ENCODE measurements at regions of chr5 and their contacts with region 1.

Region 1: DNA sequence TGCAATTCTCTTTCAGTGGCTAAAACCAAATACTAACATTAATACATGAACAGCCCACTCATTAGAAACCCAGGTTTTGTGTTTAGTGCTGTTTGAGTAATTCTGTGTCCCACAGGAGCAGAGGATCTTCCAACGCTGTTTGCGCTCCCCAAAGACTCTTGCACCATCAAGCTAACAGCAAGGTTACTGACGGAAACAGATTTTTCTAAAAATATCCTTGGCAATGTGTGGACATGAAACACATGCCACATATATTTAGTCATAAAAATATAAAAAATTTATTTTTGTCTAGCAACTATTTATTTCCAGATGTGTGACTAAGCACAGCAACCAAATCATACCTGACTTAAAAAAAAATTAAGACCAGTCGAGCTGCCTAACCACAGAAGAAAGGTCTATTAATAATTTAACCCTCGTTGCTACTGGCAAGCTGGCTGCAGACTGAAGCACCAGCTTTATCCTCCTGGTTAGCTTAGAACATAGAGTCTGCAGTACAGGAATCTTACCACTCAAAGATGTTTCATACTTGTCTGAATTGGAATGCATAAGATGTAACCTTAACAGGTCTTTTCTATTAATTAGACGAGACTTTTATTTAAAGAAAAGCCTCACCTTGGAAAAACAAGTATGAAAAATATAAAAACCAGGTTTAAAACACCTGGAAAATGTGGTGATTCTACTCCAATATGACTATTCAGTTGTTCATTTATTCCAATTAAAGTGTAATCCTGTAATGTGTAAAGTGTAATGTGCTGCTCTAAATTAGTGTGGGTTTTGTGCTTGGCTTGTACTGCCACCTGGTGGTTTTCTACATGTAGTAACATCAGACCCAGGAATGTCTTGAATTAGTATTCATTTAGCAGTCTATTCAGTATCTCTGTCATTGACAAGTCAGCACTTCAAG is 272.5 kb downstream of the EPB41L4A start:
- DNase-seq: peak; percentile 39 to 69
- ATAC-seq: peak; percentile 90 to 95 (median 91)
- H3K4me3 ChIP-seq: no peak overlapping the region
- H3K27ac ChIP-seq: peak overlapping the region; percentile 74
- H3K4me1 ChIP-seq: peaks cover 17% of the 10 kb centered on the region
- H3K27me3 ChIP-seq: no peaks in the 10 kb centered on the region
- CTCF ChIP-seq: peak; percentile 94

Region 2: GRCh38 chr5:111158105-111158744 is 988.4 kb before region 1 on chr5:
- intact Hi-C with region 1: loop called in 1 of 2 experiments (anchors 5 kb)
- DNase-seq: peak in 1 of 2 donors; percentile 16
- ATAC-seq: peak in 2 of 4 donors; percentile 52 to 61
- H3K4me3 ChIP-seq: no peak overlapping the region
- H3K27ac ChIP-seq: no peak overlapping the region
- H3K4me1 ChIP-seq: no peaks in the 10 kb centered on the region
- H3K27me3 ChIP-seq: peaks cover 0 to 2% (median 0%) of the 10 kb centered on the region in 3 donors
- CTCF ChIP-seq: peak; percentile 98

Region 3: DNA sequence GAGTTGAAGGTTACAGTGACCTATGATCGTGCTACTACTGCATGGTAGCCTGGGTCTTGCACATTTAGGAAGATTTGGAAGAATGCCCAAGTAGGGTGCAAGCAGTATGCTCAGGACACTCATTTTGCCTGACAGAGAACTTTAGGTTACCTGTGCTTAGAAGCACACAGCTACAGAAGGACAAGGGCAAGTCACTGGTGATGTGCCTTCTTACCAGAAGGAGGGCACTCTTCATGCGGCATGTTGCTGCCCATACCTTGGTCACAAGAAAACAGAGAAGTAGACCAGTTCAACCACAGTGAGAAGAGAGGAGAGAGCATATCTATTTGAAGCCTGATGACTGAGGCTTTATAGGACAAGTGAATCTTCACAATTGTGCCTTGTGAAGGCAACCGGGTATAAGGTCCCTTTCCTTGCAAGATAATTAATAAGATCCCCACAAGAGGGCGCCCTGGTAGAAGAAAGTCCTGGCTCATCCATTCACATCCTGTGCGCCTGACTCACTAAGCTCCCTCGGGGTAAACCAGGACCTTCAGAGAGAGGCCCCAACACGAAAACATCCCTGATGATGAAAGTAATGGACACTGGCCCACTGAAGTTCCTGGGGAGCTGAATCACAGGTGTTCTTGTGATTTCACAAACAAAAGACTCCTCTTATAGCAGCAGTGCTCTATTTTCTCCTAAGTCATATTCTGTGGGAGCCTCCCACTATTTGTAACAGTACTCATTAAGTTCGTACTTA is 596.1 kb before region 1 on chr5:
- intact Hi-C with region 1: loop called (anchors 1 to 2 kb)
- DNase-seq: peak; percentile 76 to 83
- ATAC-seq: peak; percentile 93 to 99 (median 99)
- H3K4me3 ChIP-seq: no peak overlapping the region
- H3K27ac ChIP-seq: peak overlapping the region; percentile 75
- H3K4me1 ChIP-seq: peaks cover 8% of the 10 kb centered on the region
- H3K27me3 ChIP-seq: no peaks in the 10 kb centered on the region
- CTCF ChIP-seq: peak; percentile 76

Region 4: DNA sequence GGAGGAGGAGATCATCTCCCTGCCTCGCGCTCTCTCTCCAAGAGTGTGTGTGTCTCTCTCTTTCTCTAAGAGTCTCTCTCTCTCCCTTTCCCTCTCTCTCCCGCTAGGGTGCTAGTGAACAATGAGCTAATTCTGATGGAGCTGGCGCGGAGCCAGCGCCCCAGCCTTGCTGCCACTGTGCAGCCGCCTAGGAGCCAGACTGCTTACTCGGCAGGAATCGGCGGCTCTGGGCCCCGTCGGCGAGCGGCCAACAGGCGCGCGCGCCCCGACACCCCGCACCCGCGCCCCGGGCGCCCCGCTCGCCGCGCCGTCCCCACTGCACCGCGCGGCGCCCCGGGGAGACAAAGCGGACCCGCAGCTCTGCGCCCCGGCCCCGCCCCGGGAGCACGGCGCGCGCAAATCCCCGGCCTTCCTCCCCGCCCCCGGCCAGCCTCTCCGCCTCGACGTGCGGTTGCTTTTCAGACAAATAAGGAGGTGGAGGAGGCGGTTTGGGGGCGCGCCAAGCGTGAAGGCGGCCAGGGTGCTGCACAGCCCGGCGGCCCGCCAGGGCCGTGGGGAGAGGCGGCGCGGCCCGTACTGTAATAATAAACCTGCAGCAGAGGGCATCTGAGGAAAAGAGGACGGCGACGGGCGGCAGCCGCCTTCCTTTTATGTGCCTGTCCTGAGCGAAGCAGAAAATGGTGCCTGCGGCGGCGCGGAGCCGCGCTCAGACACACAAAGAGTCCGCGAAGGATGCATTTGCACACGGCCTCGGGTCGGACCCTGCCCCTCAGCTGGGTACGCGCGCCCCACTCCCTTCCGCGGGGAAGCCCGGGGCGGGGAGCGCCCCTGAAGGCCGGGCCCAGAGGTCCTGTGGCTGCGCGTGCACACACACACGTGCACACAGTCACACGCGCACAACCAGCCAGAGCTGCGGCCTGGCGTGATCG is 389.0 kb before region 1 on chr5:
- intact Hi-C with region 1: loop called (anchors 2 to 10 kb)
- DNase-seq: peak; percentile 93 to 96
- ATAC-seq: peak; percentile 85 to 92 (median 88)
- H3K4me3 ChIP-seq: peak overlapping the region; percentile 78
- H3K27ac ChIP-seq: peak overlapping the region; percentile 90
- H3K4me1 ChIP-seq: peaks cover 36% of the 10 kb centered on the region
- H3K27me3 ChIP-seq: no peaks in the 10 kb centered on the region
- CTCF ChIP-seq: peak; percentile 28

Region 5: GRCh38 chr5:112004867-112005622 is 141.5 kb before region 1 on chr5:
- intact Hi-C with region 1: no loop called
- DNase-seq: no peak
- ATAC-seq: no peak
- H3K4me3 ChIP-seq: no peak overlapping the region
- H3K27ac ChIP-seq: no peak overlapping the region
- H3K4me1 ChIP-seq: no peaks in the 10 kb centered on the region
- H3K27me3 ChIP-seq: no peaks in the 10 kb centered on the region
- CTCF ChIP-seq: no peak

Region 6: GRCh38 chr5:112329419-112330090 is 183.0 kb after region 1 on chr5:
- intact Hi-C with region 1: no loop called
- DNase-seq: no peak
- ATAC-seq: no peak
- H3K4me3 ChIP-seq: no peak overlapping the region
- H3K27ac ChIP-seq: no peak overlapping the region
- H3K4me1 ChIP-seq: no peaks in the 10 kb centered on the region
- H3K27me3 ChIP-seq: no peaks in the 10 kb centered on the region
- CTCF ChIP-seq: no peak

Measured in psoas muscle (tissue), 8 donors.